ENCODE measurements at regions of chr18 and their contacts with region 1.

Region 1: GRCh38 chr18:6752202-6752860 is 22.8 kb downstream of the ARHGAP28 start:
- DNase-seq: no peak
- ATAC-seq: peak in 1 of 4 donors; percentile 18
- H3K4me3 ChIP-seq: peak overlapping the region; percentile 4
- H3K27ac ChIP-seq: peak overlapping the region; percentile 4
- H3K4me1 ChIP-seq: peaks cover 19% of the 10 kb centered on the region
- H3K27me3 ChIP-seq: no peaks in the 10 kb centered on the region
- CTCF ChIP-seq: no peak

Region 2: GRCh38 chr18:6427286-6427685 is 325.0 kb before region 1 on chr18:
- intact Hi-C with region 1: no loop called
- DNase-seq: no peak
- ATAC-seq: no peak
- H3K4me3 ChIP-seq: no peak overlapping the region
- H3K27ac ChIP-seq: no peak overlapping the region
- H3K4me1 ChIP-seq: no peaks in the 10 kb centered on the region
- H3K27me3 ChIP-seq: no peaks in the 10 kb centered on the region
- CTCF ChIP-seq: no peak

Region 3: GRCh38 chr18:6781786-6782185 is 29.5 kb after region 1 on chr18:
- intact Hi-C with region 1: loop called in 1 of 2 experiments (anchors 5 kb)
- DNase-seq: no peak
- ATAC-seq: peak; percentile 86 to 97 (median 94)
- H3K4me3 ChIP-seq: no peak overlapping the region
- H3K27ac ChIP-seq: peak overlapping the region; percentile 77
- H3K4me1 ChIP-seq: peaks cover 14% of the 10 kb centered on the region
- H3K27me3 ChIP-seq: no peaks in the 10 kb centered on the region
- CTCF ChIP-seq: no peak

Region 4: GRCh38 chr18:6795307-6795706 is 43.0 kb after region 1 on chr18:
- intact Hi-C with region 1: no loop called
- DNase-seq: no peak
- ATAC-seq: peak in 2 of 4 donors; percentile 59 to 74
- H3K4me3 ChIP-seq: no peak overlapping the region
- H3K27ac ChIP-seq: no peak overlapping the region
- H3K4me1 ChIP-seq: no peaks in the 10 kb centered on the region
- H3K27me3 ChIP-seq: no peaks in the 10 kb centered on the region
- CTCF ChIP-seq: no peak

Region 5: DNA sequence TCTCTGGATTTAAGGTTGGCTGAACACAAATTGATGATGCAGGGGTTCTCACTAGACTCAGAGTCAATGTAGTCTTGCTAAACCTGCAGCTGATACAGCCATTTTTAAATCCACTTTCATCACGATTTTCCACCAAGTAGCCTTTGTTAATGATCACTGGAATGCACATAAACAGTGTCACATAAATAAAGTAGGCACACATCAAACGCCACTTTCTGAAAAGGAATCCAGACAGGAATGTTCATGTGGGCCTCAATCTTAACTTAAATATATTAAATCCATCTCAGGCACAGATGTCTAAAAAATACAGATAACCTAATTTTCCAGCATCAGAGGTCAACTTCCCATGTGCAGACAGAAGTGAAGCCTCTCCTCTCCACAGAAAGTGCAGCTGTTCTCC is 306.9 kb after region 1 on chr18:
- intact Hi-C with region 1: no loop called
- DNase-seq: no peak
- ATAC-seq: no peak
- H3K4me3 ChIP-seq: no peak overlapping the region
- H3K27ac ChIP-seq: no peak overlapping the region
- H3K4me1 ChIP-seq: no peaks in the 10 kb centered on the region
- H3K27me3 ChIP-seq: peaks cover 0 to 3% (median 0%) of the 10 kb centered on the region in 3 donors
- CTCF ChIP-seq: no peak